ENCODE measurements at regions of chr4 and their contacts with region 1.

Region 1: GRCh38 chr4:28209371-28209924 is 1348.8 kb downstream of the STIM2 start:
- DNase-seq: no peak

Region 2: DNA sequence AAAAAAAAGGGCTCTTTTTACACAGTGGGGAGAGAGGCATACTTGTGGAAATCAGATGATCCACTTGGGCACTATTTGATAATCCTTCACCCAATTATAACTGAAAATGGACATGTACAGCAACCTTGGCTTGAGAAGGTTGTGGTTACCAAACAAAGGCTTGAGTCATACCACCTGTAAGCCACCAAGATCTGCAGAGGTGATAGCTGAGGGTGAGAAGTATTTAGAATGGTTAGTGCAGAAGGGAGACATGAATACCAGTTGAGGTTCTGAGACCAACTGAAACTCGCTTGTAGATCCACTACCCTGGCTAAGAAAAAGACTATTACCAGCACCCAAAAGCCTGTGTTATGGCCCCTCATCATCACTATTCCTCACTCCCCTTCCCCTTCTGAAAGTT is 734.8 kb before region 1 on chr4:
- intact Hi-C with region 1: no loop called
- DNase-seq: no peak

Region 3: GRCh38 chr4:27635936-27636913 is 573.2 kb before region 1 on chr4:
- intact Hi-C with region 1: loop called in 1 of 2 experiments (anchors 5 kb)
- DNase-seq: no peak

Region 4: DNA sequence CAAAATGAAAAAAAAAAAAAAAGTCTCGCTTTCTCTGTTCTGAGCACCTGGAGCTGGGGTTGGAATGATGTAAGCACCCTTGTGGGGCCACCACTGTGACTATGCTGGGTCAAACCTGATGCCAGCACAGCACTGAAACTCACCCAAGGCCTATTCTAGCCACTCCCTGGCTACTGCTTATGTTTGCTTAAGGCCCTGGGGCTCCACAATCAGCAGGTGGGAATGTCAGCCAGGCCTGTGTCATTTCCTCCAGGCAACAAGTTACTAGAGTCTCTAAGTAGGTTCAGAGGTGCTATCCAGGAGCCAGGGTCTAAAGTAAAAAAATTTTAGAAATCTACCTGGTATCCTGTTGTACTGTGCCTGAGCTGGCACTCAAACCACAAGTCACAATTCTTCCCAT is 42.0 kb before region 1 on chr4:
- intact Hi-C with region 1: no loop called
- DNase-seq: no peak